Activated T-helper 1 cell treated with anti-CD3 and anti-CD28 coated beads, Interleukin-12 subunit alpha, Interleukin-12 subunit beta, Interleukin-2, Interleukin-4 antibody, amounts not matched to agents 30 ng/mL and 10 ng/mL and 1 ng/mL, durations not matched to agents 14 hours and 24 hours and 36 hours (primary cell): ENCODE measurements at regions of chr17 and their contacts with region 1.

Region 1: GRCh38 chr17:27892866-27893769 is at the start of gene LYRM9:
- DNase-seq: peak; percentile 92
- H3K4me3 Mint-ChIP-seq: peak within 1 kb of the TSS; percentile 85
- H3K27ac Mint-ChIP-seq: peak within 1 kb of the TSS; percentile 85
- H3K4me1 Mint-ChIP-seq: peaks cover 29% of the 10 kb centered on the region
- H3K27me3 Mint-ChIP-seq: peaks cover 40% of the 10 kb centered on the region
- total RNA-seq, gene LYRM9: 1.9 and 2.9 TPM in 2 replicates

Region 2: GRCh38 chr17:27390540-27390939 is 502.6 kb before region 1 on chr17:
- intact Hi-C with region 1: no loop called
- DNase-seq: no peak
- H3K4me3 Mint-ChIP-seq: no peak overlapping the region
- H3K27ac Mint-ChIP-seq: no peak overlapping the region
- H3K4me1 Mint-ChIP-seq: no peaks in the 10 kb centered on the region
- H3K27me3 Mint-ChIP-seq: peaks cover 26% of the 10 kb centered on the region

Region 3: GRCh38 chr17:28252436-28252835 is 359.3 kb after region 1 on chr17:
- intact Hi-C with region 1: loop called (anchors 1 kb)
- DNase-seq: no peak
- H3K4me3 Mint-ChIP-seq: no peak overlapping the region
- H3K27ac Mint-ChIP-seq: no peak overlapping the region
- H3K4me1 Mint-ChIP-seq: peaks cover 8% of the 10 kb centered on the region
- H3K27me3 Mint-ChIP-seq: peaks cover 14% of the 10 kb centered on the region

Region 4: GRCh38 chr17:28951991-28952975 is 1059.2 kb after region 1 on chr17:
- intact Hi-C with region 1: no loop called
- DNase-seq: peak; percentile 96
- H3K4me3 Mint-ChIP-seq: no peak overlapping the region
- H3K27ac Mint-ChIP-seq: no peak overlapping the region
- H3K4me1 Mint-ChIP-seq: peaks cover 15% of the 10 kb centered on the region
- H3K27me3 Mint-ChIP-seq: no peaks in the 10 kb centered on the region